ENCODE measurements at regions of chr19 and their contacts with region 1.

Region 1: DNA sequence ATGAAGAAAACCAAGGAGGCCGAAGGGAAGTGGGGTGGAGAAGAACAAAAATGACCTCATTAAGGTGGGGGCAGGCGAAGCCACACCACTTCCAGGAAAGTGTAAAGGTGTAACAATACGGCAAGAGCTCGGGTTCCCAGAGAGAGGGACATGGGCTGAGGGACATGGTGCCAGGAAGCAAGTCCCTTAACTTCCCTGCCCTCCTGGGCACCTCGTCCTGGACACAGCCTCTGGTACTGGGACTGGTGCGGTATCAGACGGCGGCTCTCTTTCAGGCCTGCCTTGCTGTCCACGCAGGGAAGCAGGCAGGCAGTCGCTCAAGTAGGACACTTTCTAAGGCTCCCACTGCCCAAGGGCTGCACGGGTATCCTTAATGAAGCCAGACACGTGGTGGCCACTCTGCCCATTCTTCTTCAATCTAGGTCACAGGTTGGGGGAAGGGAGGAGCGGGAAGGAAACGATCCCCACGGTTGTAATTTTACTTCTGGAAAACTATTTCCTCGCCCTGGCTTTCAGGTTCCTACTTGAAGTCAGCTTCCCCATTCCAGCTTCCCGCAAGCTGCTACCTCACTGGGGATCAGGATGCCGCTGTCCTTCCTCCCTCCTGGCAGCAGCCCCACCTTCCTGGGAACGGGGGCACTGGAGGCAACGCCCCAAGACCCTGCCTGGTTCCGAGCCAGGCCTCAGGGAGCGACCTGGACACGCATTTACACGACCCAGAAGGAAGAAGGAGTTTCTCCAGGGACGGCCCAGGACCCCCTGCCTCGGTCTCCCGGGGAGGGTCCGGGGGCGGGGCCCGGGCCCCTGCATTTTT is 1.2 kb downstream of the AP3D1 start:
- DNase-seq: peak; percentile 26 to 30
- H3K4me3 ChIP-seq: peak overlapping the region; percentile 87 to 98 (median 90)
- H3K27ac ChIP-seq: peak overlapping the region in 2 of 3 donors; percentile 57 to 80
- H3K4me1 ChIP-seq: peaks cover 11 to 19% of the 10 kb centered on the region in 2 donors
- H3K27me3 ChIP-seq: no peaks in the 10 kb centered on the region
- CTCF ChIP-seq: no peak
- POLR2A ChIP-seq: no peak

Region 2: DNA sequence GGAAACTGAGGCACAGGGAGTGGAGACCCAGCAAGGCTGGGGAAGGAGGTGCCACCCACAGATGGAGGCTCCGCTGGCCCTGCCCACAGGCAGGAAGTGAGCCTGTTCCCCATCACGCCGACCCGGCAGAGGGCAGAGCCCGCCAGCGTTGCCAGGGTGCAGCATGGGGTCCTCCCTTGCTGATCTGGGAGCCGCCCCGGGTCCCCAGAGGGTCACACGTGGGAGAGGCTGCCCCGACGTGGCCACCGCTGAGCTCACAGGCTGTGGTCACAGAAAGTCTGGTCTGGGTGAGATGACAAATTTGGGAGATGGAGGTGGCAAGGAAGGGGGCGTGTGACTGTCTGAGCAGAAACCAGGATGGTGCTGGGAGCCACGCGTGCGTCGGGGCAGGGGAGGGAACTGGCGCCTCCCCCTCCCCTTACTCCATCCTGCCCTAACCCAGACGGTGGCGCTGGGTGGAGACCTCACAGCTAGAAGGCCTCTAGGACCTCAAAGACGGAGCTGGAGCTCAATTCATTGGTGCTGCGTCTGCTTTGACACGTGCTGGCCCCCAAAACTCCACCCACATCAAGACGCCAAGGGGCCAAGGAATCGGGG is 589.8 kb before region 1 on chr19:
- intact Hi-C with region 1: no loop called
- DNase-seq: no peak
- H3K4me3 ChIP-seq: no peak overlapping the region
- H3K27ac ChIP-seq: no peak overlapping the region
- H3K4me1 ChIP-seq: no peaks in the 10 kb centered on the region
- H3K27me3 ChIP-seq: no peaks in the 10 kb centered on the region
- CTCF ChIP-seq: no peak
- POLR2A ChIP-seq: no peak

Region 3: GRCh38 chr19:2391118-2391725 is 241.0 kb after region 1 on chr19:
- intact Hi-C with region 1: loop called (anchors 10 kb)
- DNase-seq: peak; percentile 18 to 33
- H3K4me3 ChIP-seq: no peak overlapping the region
- H3K27ac ChIP-seq: no peak overlapping the region
- H3K4me1 ChIP-seq: peaks cover 5 to 6% of the 10 kb centered on the region in 2 donors
- H3K27me3 ChIP-seq: no peaks in the 10 kb centered on the region
- CTCF ChIP-seq: peak; percentile 60 to 88 (median 68)
- POLR2A ChIP-seq: no peak